Left ventricle myocardium inferior (tissue), 1 donor: ENCODE measurements at regions of chr17 and their contacts with region 1.

Region 1: GRCh38 chr17:16439811-16440753 is 24.7 kb downstream of the TRPV2 start:
- DNase-seq: no peak
- H3K4me3 ChIP-seq: peak overlapping the region; percentile 98
- H3K27ac ChIP-seq: peak overlapping the region; percentile 89
- H3K4me1 ChIP-seq: peaks cover 66% of the 10 kb centered on the region
- H3K27me3 ChIP-seq: no peaks in the 10 kb centered on the region
- CTCF ChIP-seq: no peak

Region 2: DNA sequence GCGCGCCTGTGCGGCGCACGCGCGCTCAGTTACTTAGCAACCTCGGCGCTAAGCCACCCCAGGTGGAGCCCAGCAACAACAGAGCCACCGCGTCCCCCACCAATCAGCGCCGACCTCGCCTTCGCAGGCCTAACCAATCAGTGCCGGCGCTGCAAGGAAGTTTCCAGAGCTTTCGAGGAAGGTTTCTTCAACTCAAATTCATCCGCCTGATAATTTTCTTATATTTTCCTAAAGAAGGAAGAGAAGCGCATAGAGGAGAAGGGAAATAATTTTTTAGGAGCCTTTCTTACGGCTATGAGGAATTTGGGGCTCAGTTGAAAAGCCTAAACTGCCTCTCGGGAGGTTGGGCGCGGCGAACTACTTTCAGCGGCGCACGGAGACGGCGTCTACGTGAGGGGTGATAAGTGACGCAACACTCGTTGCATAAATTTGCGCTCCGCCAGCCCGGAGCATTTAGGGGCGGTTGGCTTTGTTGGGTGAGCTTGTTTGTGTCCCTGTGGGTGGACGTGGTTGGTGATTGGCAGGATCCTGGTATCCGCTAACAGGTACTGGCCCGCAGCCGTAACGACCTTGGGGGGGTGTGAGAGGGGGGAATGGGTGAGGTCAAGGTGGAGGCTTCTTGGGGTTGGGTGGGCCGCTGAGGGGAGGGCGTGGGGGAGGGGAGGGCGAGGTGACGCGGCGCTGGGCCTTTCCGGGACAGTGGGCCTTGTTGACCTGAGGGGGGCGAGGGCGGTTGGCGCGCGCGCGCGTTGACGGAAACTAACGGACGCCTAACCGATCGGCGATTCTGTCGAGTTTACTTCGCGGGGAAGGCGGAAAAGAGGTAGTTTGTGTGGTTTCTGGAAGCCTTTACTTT is 59.2 kb before region 1 on chr17 and contains the start of gene UBB:
- intact Hi-C with region 1: loop called (anchors 10 kb)
- DNase-seq: peak; percentile 97
- H3K4me3 ChIP-seq: peak within 1 kb of the TSS; percentile 74
- H3K27ac ChIP-seq: peak within 1 kb of the TSS; percentile 99
- H3K4me1 ChIP-seq: peaks cover 47% of the 10 kb centered on the region
- H3K27me3 ChIP-seq: no peaks in the 10 kb centered on the region
- CTCF ChIP-seq: no peak
- total RNA-seq, gene UBB: 1,605 TPM

Region 3: GRCh38 chr17:16506188-16506587 is 66.1 kb after region 1 on chr17:
- intact Hi-C with region 1: no loop called
- DNase-seq: no peak
- H3K4me3 ChIP-seq: no peak overlapping the region
- H3K27ac ChIP-seq: no peak overlapping the region
- H3K4me1 ChIP-seq: no peaks in the 10 kb centered on the region
- H3K27me3 ChIP-seq: no peaks in the 10 kb centered on the region
- CTCF ChIP-seq: no peak